CD8-positive, alpha-beta memory T cell (primary cell): ENCODE measurements at regions of chr5 and their contacts with region 1.

Region 1: GRCh38 chr5:139787568-139788293 is 7.9 kb upstream of the PSD2 start:
- DNase-seq: peak; percentile 76 to 85 (median 80)
- H3K4me3 ChIP-seq: peak overlapping the region; percentile 93
- H3K4me3 Mint-ChIP-seq: peak overlapping the region; percentile 73 to 92 (median 87)
- H3K27ac ChIP-seq: peak overlapping the region; percentile 31
- H3K27ac Mint-ChIP-seq: peak overlapping the region in 4 of 8 donors; percentile 42 to 77 (median 62)
- H3K4me1 ChIP-seq: peaks cover 10% of the 10 kb centered on the region
- H3K4me1 Mint-ChIP-seq: peaks cover 0 to 8% (median 8%) of the 10 kb centered on the region in 3 donors
- H3K27me3 ChIP-seq: peaks cover 15% of the 10 kb centered on the region
- H3K27me3 Mint-ChIP-seq: peaks cover 14 to 26% of the 10 kb centered on the region in 2 donors

Region 2: DNA sequence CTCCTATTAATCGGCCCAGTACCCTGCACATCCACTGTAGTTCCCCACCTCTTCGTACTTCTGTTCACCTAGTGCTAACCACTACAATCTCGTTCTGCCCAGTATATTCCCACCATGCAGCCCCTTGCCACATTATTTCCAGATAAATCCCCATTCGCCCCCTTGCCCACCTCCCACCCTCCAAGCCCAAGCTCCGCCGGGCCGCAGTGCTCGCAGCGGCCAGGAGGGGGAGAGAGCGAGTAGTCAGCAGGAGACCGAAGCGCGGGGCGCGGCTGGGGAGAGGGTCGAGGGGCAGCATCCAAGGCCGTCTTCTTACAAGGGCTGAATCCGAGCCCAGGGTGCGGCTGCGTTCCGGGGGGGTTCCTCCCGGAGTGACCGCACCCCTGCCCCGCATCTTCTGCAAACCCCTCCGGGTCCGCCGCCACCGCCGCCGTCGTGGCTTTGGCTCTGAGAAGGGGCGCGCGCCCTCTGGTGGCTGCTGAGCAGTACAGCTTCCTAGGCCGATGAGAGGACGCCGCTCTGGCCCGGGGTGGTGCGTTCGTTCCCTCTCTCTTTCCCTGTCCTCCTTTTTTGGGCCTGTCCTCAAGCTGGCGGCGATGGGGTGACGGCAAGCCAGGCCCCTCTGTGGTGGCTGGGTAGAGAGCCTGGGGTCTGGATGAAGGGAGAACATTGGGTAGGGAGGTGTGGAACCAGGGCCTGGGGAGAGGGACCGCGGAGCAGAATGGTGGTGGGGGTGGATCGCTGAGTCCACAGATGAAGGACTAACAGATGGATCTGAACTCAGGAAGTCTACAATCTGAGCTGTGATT is 22.1 kb before region 1 on chr5:
- CTCF ChIA-PET with region 1: interaction called, 26 read pairs
- POLR2A ChIA-PET with region 1: no interaction called
- DNase-seq: peak; percentile 76 to 86 (median 82)
- H3K4me3 ChIP-seq: peak overlapping the region; percentile 47
- H3K4me3 Mint-ChIP-seq: peak overlapping the region; percentile 20 to 80 (median 68)
- H3K27ac ChIP-seq: no peak overlapping the region
- H3K27ac Mint-ChIP-seq: peak overlapping the region in 6 of 8 donors; percentile 17 to 67 (median 52)
- H3K4me1 ChIP-seq: peaks cover 5% of the 10 kb centered on the region
- H3K4me1 Mint-ChIP-seq: peaks cover 11 to 18% (median 13%) of the 10 kb centered on the region in 3 donors
- H3K27me3 ChIP-seq: peaks cover 19% of the 10 kb centered on the region
- H3K27me3 Mint-ChIP-seq: peaks cover 18 to 26% of the 10 kb centered on the region in 2 donors

Region 3: DNA sequence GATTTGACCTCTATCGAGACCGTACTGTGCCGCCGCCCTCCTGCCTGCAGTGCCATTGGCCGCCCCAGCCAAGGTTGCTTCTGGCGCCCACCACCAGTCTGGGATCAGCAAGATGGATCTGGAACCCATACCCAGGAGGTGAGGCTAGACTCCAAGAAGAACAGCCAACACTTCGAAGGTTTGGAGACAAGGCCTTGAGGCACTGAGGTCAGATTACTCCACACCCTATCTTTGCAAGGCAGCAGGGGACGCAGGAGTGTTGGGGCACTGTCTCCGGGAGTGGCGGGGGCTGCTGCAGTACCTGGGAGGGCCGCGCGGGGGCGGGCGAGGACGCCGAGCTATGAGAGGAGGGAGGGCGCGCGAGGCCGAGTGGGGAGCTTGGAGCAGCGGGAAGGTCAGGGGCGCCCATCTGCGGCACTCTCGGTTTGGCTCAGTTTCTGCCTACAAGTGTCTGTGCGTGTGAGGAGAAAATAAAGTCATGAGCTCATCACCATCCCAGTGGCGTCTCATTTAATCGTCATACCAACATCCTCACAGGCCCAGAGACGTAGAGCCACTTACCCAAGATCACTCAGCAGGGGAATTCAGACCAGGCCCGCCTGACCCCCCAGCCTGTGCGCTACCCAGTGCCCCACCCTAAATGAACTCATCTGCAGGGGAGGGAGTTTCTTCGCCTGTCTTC is 12.6 kb before region 1 on chr5:
- CTCF ChIA-PET with region 1: interaction called, 43 read pairs
- POLR2A ChIA-PET with region 1: no interaction called
- DNase-seq: peak; percentile 66 to 80 (median 74)
- H3K4me3 ChIP-seq: no peak overlapping the region
- H3K4me3 Mint-ChIP-seq: peak overlapping the region in 3 of 7 donors; percentile 32 to 52 (median 50)
- H3K27ac ChIP-seq: no peak overlapping the region
- H3K27ac Mint-ChIP-seq: no peak overlapping the region
- H3K4me1 ChIP-seq: peaks cover 4% of the 10 kb centered on the region
- H3K4me1 Mint-ChIP-seq: peaks cover 0 to 7% (median 6%) of the 10 kb centered on the region in 3 donors
- H3K27me3 ChIP-seq: no peaks in the 10 kb centered on the region
- H3K27me3 Mint-ChIP-seq: peaks cover 7 to 9% of the 10 kb centered on the region in 2 donors

Region 4: GRCh38 chr5:139844472-139845145 is 56.9 kb after region 1 on chr5:
- CTCF ChIA-PET with region 1: interaction called, 23 read pairs
- POLR2A ChIA-PET with region 1: interaction called, 4 read pairs
- DNase-seq: peak; percentile 53 to 81 (median 62)
- H3K4me3 ChIP-seq: no peak overlapping the region
- H3K4me3 Mint-ChIP-seq: peak overlapping the region in 1 of 7 donors; percentile 70
- H3K27ac ChIP-seq: no peak overlapping the region
- H3K27ac Mint-ChIP-seq: peak overlapping the region in 3 of 8 donors; percentile 25 to 76 (median 64)
- H3K4me1 ChIP-seq: no peaks in the 10 kb centered on the region
- H3K4me1 Mint-ChIP-seq: peaks cover 10 to 20% (median 18%) of the 10 kb centered on the region in 3 donors
- H3K27me3 ChIP-seq: peaks cover 10% of the 10 kb centered on the region
- H3K27me3 Mint-ChIP-seq: peaks cover 15 to 23% of the 10 kb centered on the region in 2 donors

Region 5: DNA sequence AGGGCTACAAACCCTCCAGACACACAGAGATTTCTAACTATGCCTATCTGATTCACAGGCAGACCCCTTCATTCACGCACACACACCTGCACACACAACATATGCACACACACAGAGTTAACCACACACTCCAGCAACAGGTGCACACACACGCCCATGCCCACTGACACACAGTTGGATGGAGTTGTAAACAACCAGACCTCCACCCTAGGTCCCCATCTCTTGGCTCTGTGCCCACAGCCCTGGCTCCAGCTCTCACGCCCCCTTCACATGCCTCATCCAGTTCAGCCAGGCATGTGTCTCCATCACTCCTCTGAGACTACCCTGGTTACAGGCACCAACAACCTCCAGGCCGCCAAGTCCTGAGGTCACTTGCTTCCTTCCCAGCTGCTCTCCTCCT is 69.0 kb after region 1 on chr5:
- CTCF ChIA-PET with region 1: interaction called, 79 read pairs
- POLR2A ChIA-PET with region 1: no interaction called
- DNase-seq: no peak
- H3K4me3 ChIP-seq: no peak overlapping the region
- H3K4me3 Mint-ChIP-seq: no peak overlapping the region
- H3K27ac ChIP-seq: no peak overlapping the region
- H3K27ac Mint-ChIP-seq: no peak overlapping the region
- H3K4me1 ChIP-seq: no peaks in the 10 kb centered on the region
- H3K4me1 Mint-ChIP-seq: no peaks in the 10 kb centered on the region
- H3K27me3 ChIP-seq: no peaks in the 10 kb centered on the region
- H3K27me3 Mint-ChIP-seq: peaks cover 3 to 12% of the 10 kb centered on the region in 2 donors

Region 6: DNA sequence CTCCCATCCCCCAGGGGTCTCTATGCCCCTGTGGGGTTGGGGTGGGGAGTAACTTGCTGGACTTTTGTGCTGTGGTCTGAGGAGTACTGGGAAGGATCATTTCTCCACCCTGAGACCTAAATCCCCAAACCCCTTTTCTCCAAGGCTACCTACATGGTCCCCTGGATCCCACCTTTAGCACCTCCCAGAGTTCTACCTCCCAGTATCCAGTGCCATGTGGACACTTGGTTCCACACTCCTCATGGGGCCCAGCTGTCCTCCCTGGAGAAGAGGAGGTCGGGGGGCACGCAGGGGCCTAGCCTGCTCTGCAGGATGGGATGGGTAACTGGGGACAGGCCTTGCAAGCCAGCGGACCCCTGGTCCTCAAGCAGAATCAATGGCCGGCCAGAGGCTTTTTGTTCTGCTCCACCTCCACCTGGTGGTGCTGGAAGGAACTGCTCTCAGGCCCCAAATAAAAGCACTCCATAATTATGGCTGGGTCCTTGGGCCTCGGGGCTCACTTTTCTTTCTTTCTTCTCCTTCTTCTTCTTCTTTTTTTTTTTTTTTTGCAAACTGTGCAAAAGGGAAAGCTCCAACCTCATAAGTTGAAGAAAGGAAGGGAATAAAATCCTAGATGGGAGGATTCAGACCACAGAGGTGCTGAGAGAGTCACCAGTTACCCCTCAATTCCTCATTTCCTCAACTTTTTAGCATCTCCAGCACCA is 76.3 kb after region 1 on chr5:
- CTCF ChIA-PET with region 1: interaction called, 79 read pairs
- POLR2A ChIA-PET with region 1: no interaction called
- DNase-seq: peak; percentile 22 to 67 (median 44)
- H3K4me3 ChIP-seq: no peak overlapping the region
- H3K4me3 Mint-ChIP-seq: no peak overlapping the region
- H3K27ac ChIP-seq: no peak overlapping the region
- H3K27ac Mint-ChIP-seq: no peak overlapping the region
- H3K4me1 ChIP-seq: no peaks in the 10 kb centered on the region
- H3K4me1 Mint-ChIP-seq: no peaks in the 10 kb centered on the region
- H3K27me3 ChIP-seq: no peaks in the 10 kb centered on the region
- H3K27me3 Mint-ChIP-seq: peaks cover 12 to 36% of the 10 kb centered on the region in 2 donors

Region 7: DNA sequence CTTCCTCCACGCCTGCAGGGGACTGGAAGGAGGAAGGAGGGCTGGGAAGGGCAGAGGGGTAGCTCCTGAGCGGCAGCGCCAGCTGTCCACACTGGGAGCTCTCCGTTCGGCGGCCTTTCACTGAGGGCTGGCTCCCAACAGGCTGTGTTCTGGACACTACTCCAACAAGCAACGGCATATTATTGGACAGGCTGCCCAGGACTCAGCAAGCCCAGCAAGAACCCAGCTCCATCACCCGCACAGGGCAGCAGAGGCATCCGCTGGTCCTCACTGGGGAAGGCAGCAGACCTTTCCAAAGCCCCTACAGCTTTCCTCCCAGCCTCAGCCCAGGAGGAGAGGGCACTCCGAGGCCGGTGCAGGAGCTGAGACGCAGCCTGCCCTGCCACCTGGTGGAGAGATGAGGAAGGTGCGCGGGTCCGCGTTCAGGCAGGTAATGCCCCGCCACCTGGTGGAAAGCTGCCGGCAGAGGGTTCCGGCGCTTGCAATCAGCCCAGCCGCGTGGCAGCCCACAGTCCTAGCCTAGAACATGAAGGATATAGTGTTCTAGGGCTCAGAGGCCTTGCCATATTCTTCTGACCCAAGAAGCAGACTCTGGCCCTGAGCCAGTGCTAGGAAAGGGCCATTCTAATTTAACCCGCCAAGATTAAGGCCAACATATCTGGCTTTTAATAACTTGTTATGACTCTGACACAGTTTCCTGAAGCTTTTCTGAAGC is 181.0 kb after region 1 on chr5:
- CTCF ChIA-PET with region 1: interaction called, 146 read pairs
- POLR2A ChIA-PET with region 1: no interaction called
- DNase-seq: peak; percentile 76 to 87 (median 80)
- H3K4me3 ChIP-seq: no peak overlapping the region
- H3K4me3 Mint-ChIP-seq: no peak overlapping the region
- H3K27ac ChIP-seq: no peak overlapping the region
- H3K27ac Mint-ChIP-seq: no peak overlapping the region
- H3K4me1 ChIP-seq: no peaks in the 10 kb centered on the region
- H3K4me1 Mint-ChIP-seq: peaks cover 0 to 3% (median 0%) of the 10 kb centered on the region in 3 donors
- H3K27me3 ChIP-seq: no peaks in the 10 kb centered on the region
- H3K27me3 Mint-ChIP-seq: peaks cover 11 to 32% of the 10 kb centered on the region in 2 donors